ENCODE measurements at regions of chr16 and their contacts with region 1.

Region 1: GRCh38 chr16:11833951-11834695 is 17.2 kb downstream of the RSL1D1 start:
- DNase-seq: peak; percentile 92
- H3K4me3 Mint-ChIP-seq: peak overlapping the region; percentile 63
- H3K27ac Mint-ChIP-seq: peak overlapping the region; percentile 98
- H3K4me1 Mint-ChIP-seq: peaks cover 19% of the 10 kb centered on the region
- H3K27me3 Mint-ChIP-seq: no peaks in the 10 kb centered on the region
- CTCF ChIP-seq: no peak

Region 2: GRCh38 chr16:11871193-11871592 is 37.1 kb after region 1 on chr16:
- CTCF ChIA-PET with region 1: interaction called, 4 read pairs
- POLR2A ChIA-PET with region 1: interaction called, 10 read pairs
- intact Hi-C with region 1: no loop called
- DNase-seq: peak; percentile 19
- H3K4me3 Mint-ChIP-seq: no peak overlapping the region
- H3K27ac Mint-ChIP-seq: no peak overlapping the region
- H3K4me1 Mint-ChIP-seq: peaks cover 6% of the 10 kb centered on the region
- H3K27me3 Mint-ChIP-seq: no peaks in the 10 kb centered on the region
- CTCF ChIP-seq: peak; percentile 7